ENCODE measurements at regions of chrX and their contacts with region 1.

Region 1: DNA sequence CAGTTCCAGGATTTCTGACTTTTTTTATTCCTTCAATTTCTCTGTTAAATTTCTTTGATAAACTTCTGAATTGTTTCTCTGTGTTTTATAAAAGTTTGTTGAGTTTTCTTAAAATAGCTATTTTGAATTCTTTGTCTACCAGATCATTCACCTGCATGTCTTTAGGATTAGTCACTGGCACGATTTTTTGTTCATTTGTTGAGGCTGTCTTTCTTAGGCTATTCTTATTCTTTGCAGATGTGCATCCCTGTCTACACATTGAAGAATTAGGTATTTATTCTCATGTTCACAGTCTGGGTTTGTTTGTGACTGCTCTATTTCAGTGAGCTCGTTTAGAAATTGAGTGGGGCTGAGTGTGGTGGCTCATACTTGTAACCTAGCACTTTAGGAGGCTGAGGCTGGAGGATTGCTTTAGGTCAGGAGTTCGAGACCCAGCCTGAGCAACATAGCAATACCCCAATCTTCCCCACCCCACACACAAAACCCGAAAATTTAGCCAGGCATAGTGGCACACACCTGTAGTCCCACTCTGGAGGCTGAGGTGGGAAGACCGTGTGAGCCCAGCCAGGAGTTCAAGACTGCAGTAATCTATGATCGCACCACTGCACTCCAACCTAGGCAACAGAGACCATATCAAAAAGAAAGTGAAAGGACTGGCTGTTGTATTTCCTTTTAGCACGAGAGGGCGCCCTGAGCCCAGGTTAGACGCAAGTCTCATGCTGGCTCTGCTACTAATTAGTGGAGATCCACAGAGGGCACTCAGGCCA is 42.0 kb downstream of the F8 start:
- DNase-seq: peak; percentile 84
- H3K4me3 Mint-ChIP-seq: peak overlapping the region; percentile 75
- H3K27ac Mint-ChIP-seq: peak overlapping the region; percentile 33
- H3K4me1 Mint-ChIP-seq: peaks cover 2% of the 10 kb centered on the region
- H3K27me3 Mint-ChIP-seq: no peaks in the 10 kb centered on the region

Region 2: GRCh38 chrX:154902408-154902807 is 78.1 kb before region 1 on chrX:
- CTCF ChIA-PET with region 1: no interaction called
- POLR2A ChIA-PET with region 1: no interaction called
- intact Hi-C with region 1: no loop called
- DNase-seq: no peak
- H3K4me3 Mint-ChIP-seq: no peak overlapping the region
- H3K27ac Mint-ChIP-seq: no peak overlapping the region
- H3K4me1 Mint-ChIP-seq: no peaks in the 10 kb centered on the region
- H3K27me3 Mint-ChIP-seq: no peaks in the 10 kb centered on the region

Region 3: GRCh38 chrX:154918060-154918483 is 62.4 kb before region 1 on chrX:
- CTCF ChIA-PET with region 1: interaction called, 7 read pairs
- POLR2A ChIA-PET with region 1: no interaction called
- intact Hi-C with region 1: loop called (anchors 1 kb)
- DNase-seq: peak; percentile 20
- H3K4me3 Mint-ChIP-seq: peak overlapping the region; percentile 54
- H3K27ac Mint-ChIP-seq: no peak overlapping the region
- H3K4me1 Mint-ChIP-seq: peaks cover 1% of the 10 kb centered on the region
- H3K27me3 Mint-ChIP-seq: peaks cover 2% of the 10 kb centered on the region

Region 4: DNA sequence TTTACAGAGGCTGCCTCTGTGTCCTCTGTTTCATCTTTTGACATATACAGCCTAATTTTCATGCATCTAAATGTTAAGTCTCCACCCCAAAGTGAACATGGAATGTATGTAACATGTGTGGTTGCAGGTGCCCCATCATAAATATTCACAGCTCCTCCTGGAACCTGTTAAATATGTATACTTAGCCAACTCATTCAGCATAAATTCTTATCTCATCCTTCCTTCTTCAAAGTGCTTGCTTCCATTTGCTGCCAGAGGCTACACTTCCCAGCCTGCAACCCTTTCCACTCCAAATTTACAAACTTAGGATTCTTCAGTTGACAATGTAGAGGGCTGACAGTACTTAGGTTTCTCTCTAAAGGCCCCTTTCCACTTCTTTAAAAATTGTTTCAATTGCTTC is 18.6 kb before region 1 on chrX:
- CTCF ChIA-PET with region 1: no interaction called
- POLR2A ChIA-PET with region 1: no interaction called
- intact Hi-C with region 1: no loop called
- DNase-seq: no peak
- H3K4me3 Mint-ChIP-seq: no peak overlapping the region
- H3K27ac Mint-ChIP-seq: no peak overlapping the region
- H3K4me1 Mint-ChIP-seq: no peaks in the 10 kb centered on the region
- H3K27me3 Mint-ChIP-seq: peaks cover 1% of the 10 kb centered on the region

Region 5: DNA sequence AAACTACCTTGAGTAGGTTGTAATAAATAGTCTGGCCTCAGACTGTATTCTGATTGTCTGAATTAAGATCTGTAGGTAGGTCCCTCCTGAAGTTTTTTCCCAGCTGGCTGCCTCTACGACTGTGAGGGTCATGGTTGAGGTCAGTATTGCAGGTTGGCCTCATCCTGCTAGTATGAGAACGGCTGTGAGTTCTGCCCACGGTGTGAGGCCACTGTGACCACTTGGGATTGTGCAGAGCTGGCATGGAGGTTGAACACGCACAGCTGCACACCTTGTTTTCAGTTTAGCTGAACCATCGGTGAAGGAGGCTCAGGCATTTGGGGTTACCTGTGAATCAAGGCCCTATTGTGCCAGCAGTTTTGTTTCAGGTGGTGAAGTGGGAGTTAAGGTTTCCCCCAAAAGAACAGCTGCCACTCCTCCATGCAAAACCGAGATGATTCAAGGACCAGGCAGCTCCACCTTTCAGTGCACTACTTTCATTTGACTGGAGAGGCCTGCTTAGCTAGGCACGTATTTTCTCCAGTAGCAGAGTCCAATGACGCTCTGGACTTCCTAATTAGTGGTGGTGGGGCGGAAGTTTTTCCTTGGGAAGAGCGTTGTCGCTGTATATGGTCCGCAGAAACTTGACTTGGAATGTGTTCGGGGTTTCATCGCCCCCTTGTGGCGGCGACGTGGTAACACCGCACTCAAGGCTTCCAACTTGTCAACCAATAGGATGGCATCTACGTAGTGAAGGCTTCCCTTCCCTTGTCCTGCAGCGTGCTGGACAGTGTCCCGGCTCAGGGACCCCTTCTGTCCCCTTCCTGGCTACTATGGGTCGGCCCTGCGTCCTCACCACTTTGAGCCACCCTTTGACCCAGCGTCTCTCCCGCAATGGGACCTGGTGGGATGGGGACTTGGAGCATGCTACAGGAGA is 76.6 kb after region 1 on chrX:
- CTCF ChIA-PET with region 1: interaction called, 35 read pairs
- POLR2A ChIA-PET with region 1: no interaction called
- intact Hi-C with region 1: loop called (anchors 1 kb)
- DNase-seq: peak; percentile 62
- H3K4me3 Mint-ChIP-seq: peak overlapping the region; percentile 12
- H3K27ac Mint-ChIP-seq: peak overlapping the region; percentile 60
- H3K4me1 Mint-ChIP-seq: peaks cover 18% of the 10 kb centered on the region
- H3K27me3 Mint-ChIP-seq: no peaks in the 10 kb centered on the region

Region 6: GRCh38 chrX:155070975-155071693 is 90.6 kb after region 1 on chrX and contains the starts of genes BRCC3, CMC4 and MTCP1:
- CTCF ChIA-PET with region 1: interaction called, 3 read pairs
- POLR2A ChIA-PET with region 1: no interaction called
- intact Hi-C with region 1: loop called (anchors 5 kb)
- DNase-seq: peak; percentile 86
- H3K4me3 Mint-ChIP-seq: peak within 1 kb of the TSS; percentile 91
- H3K27ac Mint-ChIP-seq: peak within 1 kb of the TSS; percentile 90
- H3K4me1 Mint-ChIP-seq: peaks cover 51% of the 10 kb centered on the region
- H3K27me3 Mint-ChIP-seq: no peaks in the 10 kb centered on the region
- total RNA-seq, gene BRCC3: 24.4 to 26.7 TPM
- total RNA-seq, gene CMC4: 4.9 to 7.2 TPM
- total RNA-seq, gene MTCP1: 16.2 to 19.2 TPM

Region 7: DNA sequence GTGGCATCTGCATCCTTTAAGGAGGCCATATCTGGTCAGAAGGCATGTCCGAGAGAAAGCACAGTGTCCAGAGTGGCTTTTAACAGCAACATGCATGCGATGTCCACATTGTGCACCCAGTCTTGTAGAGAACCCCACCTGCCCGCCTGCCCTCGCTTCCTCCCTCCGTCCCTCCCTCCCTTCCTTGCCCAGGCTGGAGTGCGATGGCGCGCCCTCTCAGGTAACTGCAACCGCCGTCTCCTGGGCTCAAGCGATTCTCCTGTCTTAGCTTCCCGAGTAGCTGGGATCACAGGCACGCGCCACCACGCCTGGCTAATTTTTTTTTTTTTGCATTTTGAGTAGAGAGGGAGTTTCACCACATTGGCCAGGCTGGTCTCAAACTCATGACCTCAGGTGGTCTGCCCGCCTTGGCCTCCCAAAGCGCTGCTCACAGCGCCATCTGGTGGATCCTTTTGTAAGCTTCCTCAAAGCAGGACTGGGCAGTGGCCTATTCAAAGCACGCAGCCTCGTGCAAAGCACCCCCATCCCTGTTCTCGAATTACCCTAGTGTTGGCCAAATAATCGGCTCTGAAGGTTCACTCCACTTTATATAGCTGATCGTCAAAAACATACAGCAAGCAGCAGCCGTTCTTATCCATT is 105.8 kb after region 1 on chrX:
- CTCF ChIA-PET with region 1: interaction called, 7 read pairs
- POLR2A ChIA-PET with region 1: no interaction called
- intact Hi-C with region 1: loop called (anchors 2 kb)
- DNase-seq: peak; percentile 45
- H3K4me3 Mint-ChIP-seq: no peak overlapping the region
- H3K27ac Mint-ChIP-seq: no peak overlapping the region
- H3K4me1 Mint-ChIP-seq: peaks cover 4% of the 10 kb centered on the region
- H3K27me3 Mint-ChIP-seq: no peaks in the 10 kb centered on the region

Region 8: DNA sequence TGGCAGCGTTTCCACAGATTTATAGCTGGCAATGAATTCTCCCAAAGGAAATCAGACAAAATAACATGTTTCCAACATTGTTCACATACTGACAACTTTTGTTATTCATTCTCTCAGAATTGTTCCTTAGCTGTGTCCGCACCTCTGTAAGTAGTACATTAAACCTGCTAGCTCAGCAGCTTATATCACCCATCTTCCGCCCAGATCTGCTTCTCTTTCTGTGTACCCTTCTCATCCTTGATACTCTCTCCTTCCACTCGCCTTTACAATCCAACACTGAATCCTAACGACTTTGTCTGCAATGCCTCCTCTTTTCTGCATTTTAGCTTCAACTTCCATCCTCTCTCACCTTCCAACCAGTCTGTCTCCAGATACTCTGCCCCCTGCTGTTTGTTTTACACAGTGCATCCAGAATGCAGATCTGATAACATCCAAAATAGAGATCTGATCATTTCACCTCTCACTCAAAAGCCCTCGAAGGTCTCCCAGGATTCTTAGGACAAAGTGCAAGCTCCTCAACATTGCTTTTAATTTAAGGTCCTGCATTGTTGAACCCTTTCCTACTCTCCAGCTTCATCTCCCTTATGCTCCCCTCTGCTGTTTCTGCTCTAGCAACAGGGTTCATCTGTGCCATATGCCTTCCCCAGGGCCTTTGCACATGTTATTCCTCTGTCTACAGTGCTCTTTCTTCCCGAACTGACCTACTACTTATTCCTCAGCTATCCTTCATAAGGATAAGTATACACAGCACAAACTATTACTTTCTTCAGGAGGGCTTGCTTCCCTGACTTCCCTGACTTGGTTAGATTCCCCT is 168.4 kb after region 1 on chrX:
- CTCF ChIA-PET with region 1: interaction called, 4 read pairs
- POLR2A ChIA-PET with region 1: no interaction called
- intact Hi-C with region 1: loop called (anchors 2 kb)
- DNase-seq: peak; percentile 36
- H3K4me3 Mint-ChIP-seq: no peak overlapping the region
- H3K27ac Mint-ChIP-seq: no peak overlapping the region
- H3K4me1 Mint-ChIP-seq: no peaks in the 10 kb centered on the region
- H3K27me3 Mint-ChIP-seq: no peaks in the 10 kb centered on the region

Region 9: DNA sequence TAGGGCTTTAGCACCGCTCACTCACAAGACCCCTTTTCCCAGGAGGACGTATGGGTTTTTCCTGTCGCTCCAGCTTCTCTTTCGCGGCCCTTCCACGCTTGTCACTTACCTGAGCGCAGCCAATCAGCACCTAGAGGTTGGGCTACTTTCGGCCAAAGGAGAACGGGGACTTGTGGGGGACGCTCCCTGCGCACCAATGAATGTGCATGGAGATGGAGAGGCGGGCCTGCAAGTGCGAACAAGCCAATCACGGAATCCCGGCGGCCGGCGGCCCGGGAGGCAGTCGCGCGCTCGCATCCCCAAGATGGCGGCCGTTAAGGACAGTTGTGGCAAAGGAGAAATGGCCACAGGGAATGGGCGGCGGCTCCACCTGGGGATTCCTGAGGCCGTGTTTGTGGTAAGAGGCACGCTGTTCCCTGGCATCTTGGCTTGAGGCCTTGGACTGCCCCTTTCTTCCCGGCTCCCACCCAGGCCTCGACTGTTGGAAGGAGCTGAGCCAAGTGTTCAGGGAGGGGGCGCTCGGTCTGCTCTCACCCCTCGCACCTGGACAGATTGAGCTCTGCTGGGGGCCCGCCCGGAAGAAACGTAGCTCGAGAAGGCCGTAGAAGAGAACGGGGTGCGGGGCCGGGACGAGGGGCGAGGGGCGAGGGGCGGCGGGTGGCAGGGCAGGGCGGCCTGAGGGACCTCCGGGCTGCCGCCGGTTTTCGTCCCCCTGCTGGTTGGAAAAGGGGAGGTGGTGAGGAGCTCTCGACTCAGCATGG is 235.8 kb after region 1 on chrX and contains the start of gene VBP1:
- CTCF ChIA-PET with region 1: no interaction called
- POLR2A ChIA-PET with region 1: no interaction called
- intact Hi-C with region 1: loop called (anchors 1 kb)
- DNase-seq: peak; percentile 92
- H3K4me3 Mint-ChIP-seq: peak within 1 kb of the TSS; percentile 87
- H3K27ac Mint-ChIP-seq: peak within 1 kb of the TSS; percentile 83
- H3K4me1 Mint-ChIP-seq: peaks cover 19% of the 10 kb centered on the region
- H3K27me3 Mint-ChIP-seq: no peaks in the 10 kb centered on the region
- total RNA-seq, gene VBP1: 89.7 to 100 TPM

Measured in activated CD4-positive, alpha-beta memory T cell treated with anti-CD3 and anti-CD28 coated beads for 36 hours (primary cell).